Activated naive CD4-positive, alpha-beta T cell treated with anti-CD3 and anti-CD28 coated beads for 36 hours (primary cell): ENCODE measurements at regions of chr17 and their contacts with region 1.

Region 1: GRCh38 chr17:8118769-8119580 is 661 bp upstream of the ALOXE3 start:
- DNase-seq: peak; percentile 91
- H3K4me3 Mint-ChIP-seq: peak overlapping the region; percentile 84
- H3K27ac Mint-ChIP-seq: peak overlapping the region; percentile 95
- H3K4me1 Mint-ChIP-seq: peaks cover 48% of the 10 kb centered on the region
- H3K27me3 Mint-ChIP-seq: peaks cover 36% of the 10 kb centered on the region

Region 2: GRCh38 chr17:7572588-7573323 is 546.2 kb before region 1 on chr17:
- CTCF ChIA-PET with region 1: no interaction called
- intact Hi-C with region 1: no loop called
- DNase-seq: peak; percentile 100
- H3K4me3 Mint-ChIP-seq: peak overlapping the region; percentile 85
- H3K27ac Mint-ChIP-seq: peak overlapping the region; percentile 99
- H3K4me1 Mint-ChIP-seq: peaks cover 55% of the 10 kb centered on the region
- H3K27me3 Mint-ChIP-seq: no peaks in the 10 kb centered on the region

Region 3: GRCh38 chr17:7825206-7825990 is 293.6 kb before region 1 on chr17:
- CTCF ChIA-PET with region 1: no interaction called
- intact Hi-C with region 1: no loop called
- DNase-seq: no peak
- H3K4me3 Mint-ChIP-seq: no peak overlapping the region
- H3K27ac Mint-ChIP-seq: no peak overlapping the region
- H3K4me1 Mint-ChIP-seq: no peaks in the 10 kb centered on the region
- H3K27me3 Mint-ChIP-seq: no peaks in the 10 kb centered on the region

Region 4: DNA sequence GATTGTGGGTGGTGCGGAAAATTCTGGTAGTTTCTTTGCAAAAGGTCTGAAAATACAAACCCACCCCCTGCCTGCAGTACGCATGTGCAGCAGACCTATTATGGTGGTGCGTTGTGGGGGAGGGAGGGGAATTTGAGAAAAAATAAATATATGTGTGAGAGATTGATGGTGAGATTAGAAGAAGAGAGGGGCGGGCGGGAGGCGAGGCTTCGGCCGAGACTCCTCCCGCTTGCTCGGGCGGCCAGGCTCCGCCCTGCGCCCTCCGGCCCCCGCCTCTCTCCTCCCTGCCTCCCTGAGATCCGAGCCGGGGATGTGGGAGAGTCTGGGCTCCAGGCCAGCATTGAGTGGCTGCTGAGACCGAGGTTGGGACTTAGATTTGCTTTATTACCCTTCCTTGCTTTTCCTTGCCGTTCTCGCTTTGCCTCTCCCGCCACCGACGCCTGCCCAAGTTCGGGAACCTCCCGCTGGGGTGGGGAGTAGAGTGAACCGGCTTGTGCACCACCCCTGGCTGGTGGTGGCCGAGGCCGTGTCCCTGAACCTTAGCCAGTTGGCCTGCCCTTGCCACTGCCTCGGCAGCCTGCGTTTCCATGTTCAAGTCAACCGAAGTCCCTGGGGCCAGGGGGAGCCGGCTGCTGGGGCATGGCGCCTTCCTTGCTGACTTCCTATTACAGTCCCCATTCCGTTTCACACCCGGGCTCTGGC is 231.3 kb before region 1 on chr17:
- CTCF ChIA-PET with region 1: no interaction called
- intact Hi-C with region 1: loop called (anchors 1 kb)
- DNase-seq: peak; percentile 96
- H3K4me3 Mint-ChIP-seq: no peak overlapping the region
- H3K27ac Mint-ChIP-seq: no peak overlapping the region
- H3K4me1 Mint-ChIP-seq: peaks cover 5% of the 10 kb centered on the region
- H3K27me3 Mint-ChIP-seq: no peaks in the 10 kb centered on the region

Region 5: GRCh38 chr17:8073627-8074484 is 45.1 kb before region 1 on chr17:
- CTCF ChIA-PET with region 1: interaction called, 36 read pairs
- intact Hi-C with region 1: loop called (anchors 1 kb)
- DNase-seq: peak; percentile 93
- H3K4me3 Mint-ChIP-seq: peak overlapping the region; percentile 75
- H3K27ac Mint-ChIP-seq: no peak overlapping the region
- H3K4me1 Mint-ChIP-seq: peaks cover 16% of the 10 kb centered on the region
- H3K27me3 Mint-ChIP-seq: peaks cover 28% of the 10 kb centered on the region

Region 6: GRCh38 chr17:8138672-8139371 is 19.8 kb after region 1 on chr17:
- CTCF ChIA-PET with region 1: interaction called, 29 read pairs
- intact Hi-C with region 1: loop called (anchors 1 kb)
- DNase-seq: peak; percentile 98
- H3K4me3 Mint-ChIP-seq: no peak overlapping the region
- H3K27ac Mint-ChIP-seq: no peak overlapping the region
- H3K4me1 Mint-ChIP-seq: peaks cover 13% of the 10 kb centered on the region
- H3K27me3 Mint-ChIP-seq: no peaks in the 10 kb centered on the region

Region 7: DNA sequence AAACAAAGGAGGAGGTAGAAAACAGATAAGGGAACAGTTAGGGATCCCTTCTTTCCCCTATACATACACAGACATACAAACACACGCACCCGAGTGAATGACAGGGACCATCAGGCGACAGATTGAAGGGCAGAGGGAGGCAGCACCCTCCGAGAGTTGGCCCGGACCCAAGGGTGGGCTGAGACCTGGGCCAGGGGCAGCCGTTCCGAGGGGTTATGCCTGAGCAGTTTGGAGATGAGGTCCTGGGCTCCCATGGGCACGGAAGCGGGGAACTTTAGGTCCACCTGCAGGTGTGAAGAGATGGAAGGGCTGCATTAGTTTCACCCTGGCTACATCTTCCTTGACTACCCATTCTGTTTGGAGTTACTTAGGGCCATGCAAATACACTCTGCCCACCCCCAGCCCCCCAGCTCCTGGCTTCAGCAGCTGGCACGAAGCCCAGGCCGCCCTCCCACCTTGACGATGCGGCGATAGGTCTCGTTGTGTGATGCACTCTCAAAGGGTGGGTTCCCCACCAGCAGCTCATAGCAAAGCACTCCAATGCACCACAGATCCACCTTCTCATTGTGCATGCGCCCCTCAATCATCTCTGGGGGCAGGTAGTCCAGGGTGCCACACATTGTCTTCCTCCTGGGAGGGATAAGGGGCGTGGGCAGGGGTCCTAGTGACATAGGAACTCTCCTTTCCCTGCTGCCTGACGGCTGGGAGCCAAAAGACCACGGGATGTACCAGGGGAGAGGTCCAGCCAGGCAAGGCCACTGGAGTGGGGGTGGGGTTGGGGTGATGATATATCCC is 86.0 kb after region 1 on chr17:
- CTCF ChIA-PET with region 1: no interaction called
- intact Hi-C with region 1: no loop called
- DNase-seq: no peak
- H3K4me3 Mint-ChIP-seq: no peak overlapping the region
- H3K27ac Mint-ChIP-seq: no peak overlapping the region
- H3K4me1 Mint-ChIP-seq: peaks cover 10% of the 10 kb centered on the region
- H3K27me3 Mint-ChIP-seq: no peaks in the 10 kb centered on the region

Region 8: GRCh38 chr17:8222630-8223356 is 103.8 kb after region 1 on chr17:
- CTCF ChIA-PET with region 1: interaction called, 18 read pairs
- intact Hi-C with region 1: loop called (anchors 1 kb)
- DNase-seq: peak; percentile 94
- H3K4me3 Mint-ChIP-seq: peak overlapping the region; percentile 96
- H3K27ac Mint-ChIP-seq: peak overlapping the region; percentile 96
- H3K4me1 Mint-ChIP-seq: peaks cover 37% of the 10 kb centered on the region
- H3K27me3 Mint-ChIP-seq: peaks cover 15% of the 10 kb centered on the region

Region 9: DNA sequence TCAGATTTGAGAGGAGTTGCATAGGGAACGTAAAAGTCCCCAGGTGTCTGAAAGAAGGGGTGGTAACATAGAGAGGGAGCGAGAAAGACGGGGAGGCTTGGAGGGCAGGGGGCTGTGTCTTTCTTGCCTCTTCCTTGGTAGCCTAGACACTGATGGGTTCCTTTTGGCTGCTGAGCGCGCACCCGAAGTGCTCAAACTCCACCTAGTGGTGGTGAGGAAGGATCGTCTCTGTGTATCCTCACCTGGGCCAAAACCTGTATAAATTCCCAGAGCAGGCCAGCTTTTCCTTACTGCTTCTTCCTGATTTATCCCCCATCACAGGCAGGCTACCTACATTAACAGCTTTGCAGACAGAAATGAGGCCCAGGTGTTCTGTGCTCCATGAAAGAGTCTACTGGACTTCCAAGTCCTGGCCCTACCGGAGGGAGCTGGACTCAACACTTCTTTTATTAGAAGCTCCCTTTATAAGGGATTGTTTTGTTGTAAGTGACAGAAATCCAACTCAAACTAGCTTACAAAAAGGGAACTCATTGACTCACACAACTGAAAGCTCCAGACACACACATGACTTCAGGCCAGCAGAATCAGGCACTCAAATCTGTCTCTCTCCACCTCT is 181.8 kb after region 1 on chr17:
- CTCF ChIA-PET with region 1: interaction called, 15 read pairs
- intact Hi-C with region 1: loop called (anchors 1 kb)
- DNase-seq: peak; percentile 67
- H3K4me3 Mint-ChIP-seq: no peak overlapping the region
- H3K27ac Mint-ChIP-seq: no peak overlapping the region
- H3K4me1 Mint-ChIP-seq: peaks cover 7% of the 10 kb centered on the region
- H3K27me3 Mint-ChIP-seq: no peaks in the 10 kb centered on the region

Region 10: DNA sequence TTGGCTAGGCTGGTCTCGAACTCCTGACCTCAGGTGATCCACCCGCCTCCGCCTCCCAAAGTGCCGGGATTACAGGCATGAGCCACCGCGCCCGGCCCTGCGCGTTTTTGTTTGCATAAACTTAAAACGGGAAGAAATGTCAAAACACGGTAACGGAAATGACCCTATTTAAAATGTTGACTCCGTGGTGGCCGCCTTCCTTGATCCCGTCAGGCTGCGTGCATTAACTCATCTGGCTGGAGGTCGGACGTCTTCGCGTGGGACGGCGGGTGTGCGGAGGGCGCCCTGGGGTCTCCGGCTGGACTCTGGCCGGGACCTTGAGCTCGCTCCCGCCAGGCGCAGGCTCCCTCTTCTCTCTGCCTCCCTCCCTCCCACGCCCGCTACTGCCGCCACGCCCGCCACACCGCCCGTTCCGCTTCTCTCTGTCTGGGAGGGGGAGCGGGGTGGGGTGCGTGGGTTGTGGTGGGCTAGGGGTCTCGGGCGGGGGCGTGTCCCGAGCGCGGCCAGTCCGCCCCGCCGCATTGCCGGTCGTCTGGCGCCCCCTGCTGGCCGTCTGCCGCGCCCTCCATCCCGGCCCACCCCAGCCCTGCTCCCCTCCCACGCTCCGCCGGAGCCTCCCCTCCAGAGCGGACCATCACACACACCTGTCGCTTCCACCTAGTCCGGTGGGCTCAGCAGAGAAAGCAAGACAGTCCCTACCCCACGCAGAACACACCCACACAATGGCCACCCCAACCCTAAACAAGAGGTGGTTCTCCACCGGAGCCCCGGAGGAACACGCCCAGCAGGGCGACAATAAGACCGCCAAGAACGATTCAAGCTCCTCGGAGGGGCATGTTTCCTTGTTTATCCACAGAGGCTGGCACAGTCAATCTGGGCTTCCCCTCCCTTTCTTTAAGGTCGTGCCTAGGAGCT is 626.9 kb after region 1 on chr17:
- CTCF ChIA-PET with region 1: no interaction called
- intact Hi-C with region 1: loop called (anchors 1 kb)
- DNase-seq: peak; percentile 74
- H3K4me3 Mint-ChIP-seq: peak overlapping the region; percentile 81
- H3K27ac Mint-ChIP-seq: peak overlapping the region; percentile 53
- H3K4me1 Mint-ChIP-seq: peaks cover 8% of the 10 kb centered on the region
- H3K27me3 Mint-ChIP-seq: no peaks in the 10 kb centered on the region